ENCODE measurements at regions of chr1 and their contacts with region 1.

Region 1: GRCh38 chr1:245888809-245889208 is 618.3 kb downstream of the SMYD3 start:
- DNase-seq: peak; percentile 57
- H3K4me3 ChIP-seq: no peak overlapping the region
- H3K27ac ChIP-seq: no peak overlapping the region
- H3K4me1 ChIP-seq: no peaks in the 10 kb centered on the region
- H3K27me3 ChIP-seq: no peaks in the 10 kb centered on the region
- CTCF ChIP-seq: peak in 1 of 2 donors; percentile 48
- POLR2A ChIP-seq: no peak

Region 2: GRCh38 chr1:245858722-245859492 is 29.9 kb before region 1 on chr1:
- CTCF ChIA-PET with region 1: interaction called, 12 read pairs
- POLR2A ChIA-PET with region 1: no interaction called
- dilution Hi-C with region 1: no loop called
- intact Hi-C with region 1: no loop called
- DNase-seq: no peak
- H3K4me3 ChIP-seq: no peak overlapping the region
- H3K27ac ChIP-seq: no peak overlapping the region
- H3K4me1 ChIP-seq: peaks cover 6% of the 10 kb centered on the region
- H3K27me3 ChIP-seq: no peaks in the 10 kb centered on the region
- CTCF ChIP-seq: no peak
- POLR2A ChIP-seq: no peak

Region 3: DNA sequence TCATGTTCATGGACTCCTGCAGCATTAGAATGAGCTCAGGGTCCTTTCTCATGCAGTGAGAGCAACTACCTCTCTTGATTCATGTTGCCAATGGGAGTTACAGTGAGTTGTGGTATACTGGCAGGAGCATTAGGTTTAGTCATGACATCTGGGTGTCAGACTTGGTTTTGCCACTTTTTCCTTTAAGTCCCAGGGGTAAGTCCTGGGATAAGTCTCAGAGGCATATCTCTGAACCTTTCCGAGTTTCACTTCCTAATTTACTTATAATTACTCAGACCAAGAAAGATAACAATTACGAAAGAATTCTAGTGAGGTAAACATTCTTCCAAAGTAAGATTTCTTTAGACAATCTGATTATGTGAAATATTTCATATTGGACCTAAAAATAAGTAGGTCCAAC is 12.2 kb after region 1 on chr1:
- CTCF ChIA-PET with region 1: interaction called, 36 read pairs
- POLR2A ChIA-PET with region 1: no interaction called
- dilution Hi-C with region 1: no loop called
- intact Hi-C with region 1: no loop called
- DNase-seq: no peak
- H3K4me3 ChIP-seq: no peak overlapping the region
- H3K27ac ChIP-seq: no peak overlapping the region
- H3K4me1 ChIP-seq: no peaks in the 10 kb centered on the region
- H3K27me3 ChIP-seq: no peaks in the 10 kb centered on the region
- CTCF ChIP-seq: no peak
- POLR2A ChIP-seq: no peak

Region 4: DNA sequence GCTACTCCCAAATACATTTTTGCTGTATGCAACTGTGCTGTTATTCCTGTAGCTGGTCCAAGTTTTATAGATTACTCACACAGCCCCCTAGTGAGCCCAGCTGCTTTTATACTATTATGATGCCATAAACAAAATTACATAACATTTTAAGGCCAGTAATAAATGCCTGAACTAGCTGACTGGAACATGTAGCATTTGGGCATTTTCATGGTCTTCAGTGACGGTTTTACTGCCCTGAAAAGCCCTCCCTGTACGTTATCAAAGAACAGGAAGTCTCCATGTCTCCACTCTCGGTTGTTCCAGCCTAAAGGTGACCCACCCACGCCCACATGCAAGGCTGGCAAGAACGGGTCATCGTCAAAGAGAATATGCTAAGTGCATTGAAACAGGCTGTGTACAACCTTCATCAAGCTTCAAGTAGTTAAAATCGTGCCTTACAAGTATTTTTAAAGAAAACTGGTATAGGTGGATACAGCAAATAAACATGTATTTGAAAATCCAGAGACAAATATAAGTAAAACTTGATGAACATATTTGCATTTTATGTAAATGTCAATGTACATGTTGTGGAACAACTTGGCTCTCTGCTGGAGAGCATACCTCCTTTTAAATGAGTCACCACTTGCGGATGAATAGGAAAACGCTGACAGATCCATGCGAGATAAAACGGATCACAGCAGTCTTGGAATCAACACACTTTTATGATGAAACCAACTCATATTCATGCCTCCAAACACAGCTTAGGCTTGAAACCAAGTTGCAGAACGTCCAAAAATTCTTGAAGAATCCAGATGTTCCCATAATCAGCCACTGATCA is 97.8 kb after region 1 on chr1:
- CTCF ChIA-PET with region 1: interaction called, 15 read pairs
- POLR2A ChIA-PET with region 1: no interaction called
- dilution Hi-C with region 1: no loop called
- intact Hi-C with region 1: no loop called
- DNase-seq: peak; percentile 86
- H3K4me3 ChIP-seq: no peak overlapping the region
- H3K27ac ChIP-seq: peak overlapping the region; percentile 35
- H3K4me1 ChIP-seq: peaks cover 12% of the 10 kb centered on the region
- H3K27me3 ChIP-seq: no peaks in the 10 kb centered on the region
- CTCF ChIP-seq: no peak
- POLR2A ChIP-seq: no peak

Region 5: GRCh38 chr1:246280551-246280950 is 391.7 kb after region 1 on chr1:
- CTCF ChIA-PET with region 1: interaction called, 13 read pairs
- POLR2A ChIA-PET with region 1: no interaction called
- dilution Hi-C with region 1: no loop called
- intact Hi-C with region 1: no loop called
- DNase-seq: peak; percentile 36
- H3K4me3 ChIP-seq: no peak overlapping the region
- H3K27ac ChIP-seq: no peak overlapping the region
- H3K4me1 ChIP-seq: no peaks in the 10 kb centered on the region
- H3K27me3 ChIP-seq: no peaks in the 10 kb centered on the region
- CTCF ChIP-seq: no peak
- POLR2A ChIP-seq: no peak